Psoas muscle (tissue), 8 donors: ENCODE measurements at regions of chr2 and their contacts with region 1.

Region 1: GRCh38 chr2:151771599-151772358 is 37.5 kb upstream of the NEB start:
- DNase-seq: peak; percentile 58 to 85
- ATAC-seq: peak; percentile 87 to 93 (median 90)
- H3K4me3 ChIP-seq: peak overlapping the region; percentile 28
- H3K27ac ChIP-seq: peak overlapping the region; percentile 82
- H3K4me1 ChIP-seq: peaks cover 63% of the 10 kb centered on the region
- H3K27me3 ChIP-seq: no peaks in the 10 kb centered on the region
- CTCF ChIP-seq: no peak

Region 2: DNA sequence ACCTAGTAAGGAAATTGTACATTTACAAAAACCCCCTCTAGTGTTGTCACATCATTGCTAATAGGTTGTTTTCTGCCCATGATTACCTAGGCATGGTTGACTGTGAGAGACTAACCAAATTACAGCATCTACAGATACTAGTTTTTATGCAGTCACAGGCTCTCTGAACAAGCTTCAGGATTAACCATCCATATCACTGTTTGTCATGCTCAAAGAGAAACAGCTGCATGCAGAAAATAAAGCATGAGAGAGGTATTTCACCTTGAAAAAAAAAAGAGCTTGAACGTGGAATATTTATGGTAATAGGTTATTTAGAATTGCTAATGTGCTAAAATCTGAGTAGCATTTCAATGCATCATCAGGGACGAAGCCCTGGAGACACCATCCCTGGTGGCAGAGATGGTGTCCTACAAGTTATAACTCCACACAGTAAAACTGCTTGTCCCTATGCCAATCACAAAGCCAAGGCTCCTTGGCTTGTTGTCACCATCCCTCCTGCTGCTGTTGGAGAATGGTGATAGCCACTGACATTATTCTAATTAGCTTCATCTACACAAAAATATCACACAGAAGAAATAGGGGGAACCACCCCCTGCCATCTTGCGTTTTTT is 42.9 kb before region 1 on chr2:
- intact Hi-C with region 1: loop called (anchors 1 to 5 kb)
- DNase-seq: no peak
- ATAC-seq: peak in 3 of 4 donors; percentile 33 to 43 (median 35)
- H3K4me3 ChIP-seq: peak overlapping the region; percentile 75
- H3K27ac ChIP-seq: peak overlapping the region; percentile 93
- H3K4me1 ChIP-seq: peaks cover 36% of the 10 kb centered on the region
- H3K27me3 ChIP-seq: no peaks in the 10 kb centered on the region
- CTCF ChIP-seq: peak; percentile 40

Region 3: GRCh38 chr2:151733771-151734672 is 37.8 kb before region 1 on chr2 and contains the start of gene NEB:
- intact Hi-C with region 1: loop called (anchors 1 to 5 kb)
- DNase-seq: peak; percentile 25 to 80
- ATAC-seq: peak; percentile 69 to 84 (median 80)
- H3K4me3 ChIP-seq: peak within 1 kb of the TSS; percentile 75
- H3K27ac ChIP-seq: peak within 1 kb of the TSS; percentile 93
- H3K4me1 ChIP-seq: peaks cover 12% of the 10 kb centered on the region
- H3K27me3 ChIP-seq: no peaks in the 10 kb centered on the region
- CTCF ChIP-seq: no peak
- total RNA-seq, gene NEB: 2,020 to 7,790 (median 5,587) TPM

Region 4: DNA sequence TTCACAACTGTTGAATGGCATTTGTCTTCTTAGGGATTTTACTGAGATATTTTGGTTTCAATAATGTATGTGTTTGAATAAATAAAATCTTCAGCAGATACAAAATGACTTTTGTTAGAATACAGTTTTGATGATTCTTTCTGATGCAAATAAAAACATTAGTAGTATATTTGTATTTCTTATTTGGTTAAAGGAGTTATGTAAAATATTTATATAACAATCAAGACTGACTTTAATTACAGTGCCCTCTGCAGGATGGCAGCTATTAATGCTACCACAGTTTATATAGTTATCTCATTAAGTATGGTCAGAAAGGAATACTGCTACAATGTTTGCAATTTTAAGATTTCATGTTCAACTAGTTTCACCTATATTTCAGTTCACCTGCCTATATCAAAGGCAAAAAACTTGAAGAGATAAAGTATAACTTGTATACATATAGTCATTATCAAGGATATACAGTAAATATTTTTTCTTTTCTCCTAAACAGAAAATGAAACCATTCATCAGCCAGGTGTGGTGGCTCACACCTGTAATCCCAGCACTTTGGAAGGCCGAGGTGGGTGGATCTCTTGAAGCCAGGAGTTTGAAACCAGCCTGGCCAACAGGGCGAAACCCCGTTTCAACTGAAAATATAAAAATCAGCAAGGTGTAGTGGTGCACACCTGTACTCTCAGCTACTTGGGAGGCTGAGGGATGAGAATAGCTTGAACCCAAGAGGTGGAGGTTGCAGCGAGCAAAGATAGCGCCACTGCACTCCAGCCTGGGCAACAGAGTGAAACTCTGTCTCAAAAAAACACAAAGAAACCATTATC is 36.7 kb after region 1 on chr2:
- intact Hi-C with region 1: loop called in 1 of 2 experiments (anchors 5 kb)
- DNase-seq: no peak
- ATAC-seq: peak in 3 of 4 donors; percentile 65 to 83 (median 74)
- H3K4me3 ChIP-seq: no peak overlapping the region
- H3K27ac ChIP-seq: no peak overlapping the region
- H3K4me1 ChIP-seq: peaks cover 18% of the 10 kb centered on the region
- H3K27me3 ChIP-seq: no peaks in the 10 kb centered on the region
- CTCF ChIP-seq: peak; percentile 68